ENCODE measurements at regions of chr1 and their contacts with region 1.

Region 1: GRCh38 chr1:6359216-6360116 is 34.1 kb downstream of the ACOT7 start:
- DNase-seq: no peak
- H3K4me3 ChIP-seq: peak overlapping the region in 4 of 59 donors; percentile 1 to 6 (median 4)
- H3K27ac ChIP-seq: peak overlapping the region in 17 of 59 donors; percentile 5 to 79 (median 36)
- H3K27me3 ChIP-seq: no peaks in the 10 kb centered on the region
- CTCF ChIP-seq: no peak

Region 2: DNA sequence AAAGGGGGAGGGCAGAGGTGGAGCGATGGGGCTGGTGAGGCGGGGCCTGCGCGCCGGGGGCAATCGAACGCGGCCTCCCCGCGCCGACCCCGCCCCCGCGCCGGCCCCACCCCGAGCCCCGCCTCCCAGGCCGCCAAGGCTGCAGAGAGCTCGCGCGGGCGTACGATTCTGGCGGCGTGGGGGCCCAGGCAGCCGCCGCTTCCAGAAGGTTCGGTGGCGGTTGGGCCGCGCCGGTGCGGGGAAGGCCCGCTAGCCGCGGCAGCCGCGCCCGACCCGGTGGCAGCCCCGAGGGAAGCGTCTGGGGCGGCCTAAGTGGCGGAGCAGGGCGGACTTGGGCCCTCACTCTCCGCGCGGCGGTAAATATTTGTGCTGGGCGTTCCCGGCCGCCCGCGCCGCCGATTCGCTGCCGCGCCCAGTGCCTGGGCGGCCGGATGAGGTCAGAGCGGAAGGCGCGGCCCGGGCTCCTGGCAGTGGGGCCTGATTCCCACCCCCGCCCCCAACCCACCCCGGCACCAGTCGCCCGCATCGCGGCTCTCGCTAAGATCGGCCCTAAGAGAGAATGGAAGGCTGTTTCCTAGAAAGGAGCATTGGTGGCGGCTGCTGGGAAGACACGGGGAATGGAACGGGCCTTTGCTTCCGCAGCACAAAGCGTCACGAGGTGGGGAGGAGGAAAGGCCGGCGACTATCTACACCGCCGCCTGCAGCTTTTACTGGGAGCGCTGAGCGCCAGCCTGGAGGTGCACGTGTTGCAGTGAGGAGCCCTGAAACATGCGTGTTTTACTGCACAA is 34.1 kb after region 1 on chr1 and contains the start of gene ACOT7:
- intact Hi-C with region 1: loop called in 1 of 2 experiments (anchors 2 kb)
- DNase-seq: peak; percentile 80 to 93 (median 88)
- H3K4me3 ChIP-seq: peak within 1 kb of the TSS; percentile 49 to 82 (median 70)
- H3K27ac ChIP-seq: peak within 1 kb of the TSS; percentile 94 to 100 (median 99)
- H3K27me3 ChIP-seq: no peaks in the 10 kb centered on the region
- CTCF ChIP-seq: peak in 49 of 56 donors; percentile 7 to 58 (median 30)
- total RNA-seq, gene ACOT7: 67.4 to 236 (median 171) TPM